PC-3 (cell line): ENCODE measurements at regions of chr14 and their contacts with region 1.

Region 1: DNA sequence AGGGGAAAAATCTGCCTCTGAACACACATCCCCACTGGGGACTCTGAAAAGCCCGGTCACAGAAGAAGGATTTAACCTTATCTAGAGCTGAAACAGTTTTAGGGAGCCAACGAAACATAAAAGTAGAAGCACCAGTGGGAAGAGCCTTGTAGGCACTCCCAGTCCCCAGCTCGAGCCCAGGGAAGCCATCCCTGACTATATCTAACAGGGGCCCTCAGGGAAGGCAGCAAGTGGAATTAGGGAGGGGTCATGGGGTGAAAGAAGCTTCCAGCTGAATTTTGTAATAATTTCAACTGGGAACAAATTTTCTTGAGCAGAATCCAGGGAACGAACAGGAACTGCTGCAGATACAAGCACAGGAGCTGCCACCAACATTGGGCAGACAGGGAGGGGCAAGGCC is 127.8 kb downstream of the BMP4 start:
- DNase-seq: no peak
- ATAC-seq: no peak
- H3K4me3 ChIP-seq: no peak overlapping the region
- H3K27ac ChIP-seq: no peak overlapping the region
- H3K4me1 ChIP-seq: no peaks in the 10 kb centered on the region
- H3K27me3 ChIP-seq: no peaks in the 10 kb centered on the region
- CTCF ChIP-seq: no peak

Region 2: GRCh38 chr14:53814392-53814791 is 14.4 kb before region 1 on chr14:
- CTCF ChIA-PET with region 1: no interaction called
- POLR2A ChIA-PET with region 1: interaction called, 13 read pairs
- intact Hi-C with region 1: no loop called
- DNase-seq: no peak
- ATAC-seq: no peak
- H3K4me3 ChIP-seq: no peak overlapping the region
- H3K27ac ChIP-seq: no peak overlapping the region
- H3K4me1 ChIP-seq: no peaks in the 10 kb centered on the region
- H3K27me3 ChIP-seq: no peaks in the 10 kb centered on the region
- CTCF ChIP-seq: no peak